ENCODE measurements at regions of chr19 and their contacts with region 1.

Region 1: DNA sequence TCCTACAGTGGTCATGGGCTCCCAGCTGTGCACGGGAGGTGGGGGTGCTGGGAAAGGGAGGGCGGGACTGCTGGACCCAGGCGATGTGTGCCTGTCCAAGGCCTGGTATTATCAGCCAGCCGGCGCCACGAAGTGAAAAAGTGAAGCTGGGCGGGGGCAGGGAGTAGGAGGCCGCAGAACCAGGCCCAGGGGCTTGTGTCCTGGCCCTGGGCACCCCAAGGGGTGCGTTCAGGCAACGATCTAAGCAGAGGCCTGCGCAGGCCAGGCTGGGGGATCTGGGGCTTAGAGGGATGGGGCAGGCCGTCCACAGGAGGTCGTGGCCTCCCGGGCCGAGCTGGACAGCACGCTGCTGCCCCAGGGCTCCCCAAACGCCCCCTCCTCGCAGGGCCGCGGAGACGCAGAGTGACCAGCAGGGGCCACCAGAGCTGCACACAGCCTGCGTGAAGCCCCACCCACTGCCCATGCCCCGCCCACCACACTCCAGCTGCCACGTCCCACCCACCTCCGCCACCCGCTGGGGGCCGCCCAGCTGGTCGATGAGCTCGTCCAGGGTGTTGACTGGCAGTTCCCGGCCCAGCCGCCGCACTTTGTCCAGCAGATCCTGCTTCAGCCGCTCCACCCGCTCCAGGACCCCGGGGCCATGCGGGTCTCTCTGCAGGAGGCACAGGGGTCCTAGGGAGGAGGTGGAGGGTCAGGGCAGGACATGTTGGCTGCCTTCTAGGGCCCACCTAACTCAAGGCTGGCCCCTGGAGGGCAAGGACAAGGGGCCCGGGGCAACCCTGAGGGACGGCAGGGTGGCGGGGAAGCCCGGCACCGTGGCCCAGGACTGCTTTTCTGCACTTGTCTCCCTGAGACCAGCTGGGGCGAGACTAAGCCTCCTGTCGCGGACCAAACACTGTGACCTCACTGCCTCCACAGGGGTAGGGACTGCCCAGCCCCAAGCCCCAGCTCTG is 9.5 kb downstream of the GPX4 start:
- DNase-seq: peak; percentile 96
- H3K4me3 ChIP-seq: no peak overlapping the region
- H3K27ac ChIP-seq: peak overlapping the region; percentile 59 to 86
- H3K4me1 ChIP-seq: peaks cover 35% of the 10 kb centered on the region
- H3K27me3 ChIP-seq: no peaks in the 10 kb centered on the region
- CTCF ChIP-seq: peak; percentile 81 to 84 (median 84)
- POLR2A ChIP-seq: no peak

Region 2: DNA sequence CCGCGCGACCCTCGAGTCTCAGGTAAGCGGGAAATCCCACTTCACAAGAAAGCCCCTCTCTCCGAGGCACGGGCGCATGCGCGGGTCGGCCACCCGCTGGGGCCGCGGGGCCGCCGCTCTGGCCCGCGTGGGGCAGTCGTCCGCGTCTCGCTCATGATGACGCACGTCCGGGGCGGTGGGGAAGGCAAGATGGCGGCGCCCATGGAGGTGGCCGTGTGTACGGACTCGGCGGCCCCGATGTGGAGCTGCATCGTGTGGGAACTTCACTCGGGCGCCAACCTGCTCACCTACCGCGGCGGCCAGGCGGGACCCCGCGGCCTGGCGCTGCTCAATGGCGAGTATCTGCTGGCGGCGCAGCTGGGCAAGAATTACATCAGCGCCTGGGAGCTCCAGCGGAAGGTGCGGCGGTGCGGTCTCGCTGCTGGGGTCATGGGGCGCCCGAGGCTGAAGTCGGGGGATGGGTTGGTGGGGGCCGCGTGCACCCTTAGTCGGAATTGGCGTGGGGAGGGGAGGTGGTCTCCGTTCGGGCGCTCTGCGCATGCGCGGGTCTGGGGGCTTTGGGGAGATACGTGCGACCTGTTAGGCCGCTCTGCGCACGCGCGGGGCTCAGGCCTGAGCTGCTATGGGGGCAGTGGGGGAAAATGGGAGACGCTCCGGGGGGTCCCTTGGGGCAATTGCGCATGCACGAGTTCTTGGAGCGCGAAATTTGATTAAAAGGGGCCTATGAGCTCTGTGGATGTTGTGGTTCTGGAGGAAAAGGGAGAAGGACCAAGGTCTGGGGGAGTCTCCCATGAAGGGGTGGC is 128.9 kb before region 1 on chr19 and contains the start of gene WDR18:
- intact Hi-C with region 1: no loop called
- DNase-seq: peak; percentile 96
- H3K4me3 ChIP-seq: peak within 1 kb of the TSS; percentile 90 to 100
- H3K27ac ChIP-seq: peak within 1 kb of the TSS; percentile 76 to 96
- H3K4me1 ChIP-seq: peaks cover 5% of the 10 kb centered on the region
- H3K27me3 ChIP-seq: no peaks in the 10 kb centered on the region
- CTCF ChIP-seq: peak in 2 of 3 experiments; percentile 16 to 47
- POLR2A ChIP-seq: no peak
- total RNA-seq, gene WDR18: 70.9 to 108 TPM

Region 3: GRCh38 chr19:1173845-1174809 is 60.8 kb after region 1 on chr19 and contains the start of gene SBNO2:
- intact Hi-C with region 1: loop called (anchors 5 kb)
- DNase-seq: peak; percentile 90
- H3K4me3 ChIP-seq: peak within 1 kb of the TSS; percentile 71 to 91
- H3K27ac ChIP-seq: peak within 1 kb of the TSS; percentile 85 to 95
- H3K4me1 ChIP-seq: peaks cover 34% of the 10 kb centered on the region
- H3K27me3 ChIP-seq: no peaks in the 10 kb centered on the region
- CTCF ChIP-seq: no peak
- POLR2A ChIP-seq: no peak
- total RNA-seq, gene SBNO2: 58.9 to 65.0 TPM

Region 4: GRCh38 chr19:1205114-1206062 is 92.1 kb after region 1 on chr19 and contains the start of gene STK11:
- intact Hi-C with region 1: no loop called
- DNase-seq: peak; percentile 98
- H3K4me3 ChIP-seq: peak within 1 kb of the TSS; percentile 69 to 80
- H3K27ac ChIP-seq: peak within 1 kb of the TSS; percentile 83 to 93
- H3K4me1 ChIP-seq: peaks cover 42% of the 10 kb centered on the region
- H3K27me3 ChIP-seq: no peaks in the 10 kb centered on the region
- CTCF ChIP-seq: no peak
- POLR2A ChIP-seq: peak; percentile 72
- total RNA-seq, gene STK11: 194 to 209 TPM

Measured in testis (tissue), 5 donors.